MCF 10A (cell line): ENCODE measurements at regions of chr20 and their contacts with region 1.

Region 1: DNA sequence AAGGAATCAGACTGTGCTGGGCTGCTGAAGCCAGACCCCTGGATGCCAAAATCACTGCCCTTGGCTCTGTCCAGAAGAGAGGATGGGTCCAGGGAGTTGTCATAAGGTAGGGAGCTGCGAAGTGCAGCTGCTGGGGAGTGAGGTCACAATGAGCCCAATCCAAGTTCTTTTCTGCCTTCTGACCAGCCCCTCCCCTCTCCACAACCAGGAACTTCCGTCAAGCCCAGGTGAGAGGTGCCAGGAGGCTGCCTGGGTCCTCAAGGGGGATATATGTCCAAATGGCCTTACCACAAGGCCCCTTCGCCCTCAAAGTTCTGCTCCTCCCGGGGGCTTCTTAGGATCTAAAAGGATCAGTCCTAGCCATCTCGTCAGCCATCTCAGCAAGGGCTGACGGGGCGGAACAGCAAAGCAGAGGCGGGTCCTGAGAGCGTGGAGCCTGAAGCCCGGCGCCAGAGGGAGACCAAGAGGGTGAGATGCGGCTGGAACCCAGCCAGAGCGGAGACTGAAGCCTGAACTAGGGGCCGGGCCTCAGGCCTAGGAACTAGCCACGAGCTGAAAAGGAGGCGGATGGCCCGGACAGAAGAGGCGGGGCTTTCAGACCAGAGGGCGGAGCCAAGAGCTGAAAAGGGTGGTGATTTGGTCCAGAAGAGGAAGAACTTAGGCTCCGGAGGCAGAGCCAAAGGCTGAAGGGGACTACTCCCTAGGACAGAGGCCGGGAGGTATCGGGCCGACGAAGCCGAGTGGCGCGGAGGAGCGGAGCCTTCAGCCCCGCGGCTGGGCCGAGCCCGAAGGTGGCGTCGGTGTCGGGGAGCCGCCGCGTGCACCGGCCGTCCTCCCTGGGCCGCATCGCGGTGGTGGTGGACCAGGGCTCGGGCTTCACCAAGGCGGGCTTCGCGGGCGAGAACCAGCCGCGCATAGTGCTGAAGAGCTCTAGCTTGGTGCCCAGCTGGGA is at the start of gene ACTL10:
- DNase-seq: peak; percentile 99
- H3K4me3 Mint-ChIP-seq: peak within 1 kb of the TSS; percentile 98
- H3K27ac Mint-ChIP-seq: peak within 1 kb of the TSS; percentile 74
- H3K4me1 Mint-ChIP-seq: peaks cover 14% of the 10 kb centered on the region
- H3K27me3 Mint-ChIP-seq: no peaks in the 10 kb centered on the region
- CTCF ChIP-seq: no peak
- total RNA-seq, gene ACTL10: 1.7 and 3.2 TPM in 2 replicates

Region 2: GRCh38 chr20:33450867-33451266 is 215.7 kb before region 1 on chr20:
- CTCF ChIA-PET with region 1: interaction called, 18 read pairs
- POLR2A ChIA-PET with region 1: interaction called, 13 read pairs
- intact Hi-C with region 1: no loop called
- DNase-seq: peak; percentile 60
- H3K4me3 Mint-ChIP-seq: no peak overlapping the region
- H3K27ac Mint-ChIP-seq: no peak overlapping the region
- H3K4me1 Mint-ChIP-seq: peaks cover 6% of the 10 kb centered on the region
- H3K27me3 Mint-ChIP-seq: no peaks in the 10 kb centered on the region
- CTCF ChIP-seq: no peak

Region 3: GRCh38 chr20:33584976-33585375 is 81.6 kb before region 1 on chr20:
- CTCF ChIA-PET with region 1: interaction called, 12 read pairs
- POLR2A ChIA-PET with region 1: interaction called, 3 read pairs
- intact Hi-C with region 1: no loop called
- DNase-seq: no peak
- H3K4me3 Mint-ChIP-seq: no peak overlapping the region
- H3K27ac Mint-ChIP-seq: no peak overlapping the region
- H3K4me1 Mint-ChIP-seq: peaks cover 25% of the 10 kb centered on the region
- H3K27me3 Mint-ChIP-seq: no peaks in the 10 kb centered on the region
- CTCF ChIP-seq: no peak

Region 4: DNA sequence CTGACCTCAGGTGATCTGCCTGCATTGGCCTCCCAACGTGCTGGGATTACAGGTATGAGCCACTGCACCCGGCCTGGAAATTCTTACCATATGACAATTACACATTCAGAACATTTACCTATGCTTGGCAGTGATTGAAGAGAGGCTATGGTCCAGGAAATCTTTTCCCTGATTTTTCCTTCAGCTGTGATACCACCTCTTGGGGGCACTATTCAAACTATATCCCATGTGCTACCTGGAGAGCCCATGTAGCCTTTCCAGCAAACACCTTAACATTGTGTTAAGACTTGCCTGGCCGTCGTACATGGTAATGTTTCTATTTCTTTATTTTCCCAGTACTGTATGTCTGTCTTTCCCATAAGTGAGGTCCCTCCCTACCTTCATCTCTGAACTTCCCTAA is 66.2 kb before region 1 on chr20:
- CTCF ChIA-PET with region 1: no interaction called
- POLR2A ChIA-PET with region 1: no interaction called
- intact Hi-C with region 1: no loop called
- DNase-seq: no peak
- H3K4me3 Mint-ChIP-seq: no peak overlapping the region
- H3K27ac Mint-ChIP-seq: no peak overlapping the region
- H3K4me1 Mint-ChIP-seq: peaks cover 14% of the 10 kb centered on the region
- H3K27me3 Mint-ChIP-seq: no peaks in the 10 kb centered on the region
- CTCF ChIP-seq: no peak

Region 5: GRCh38 chr20:33686100-33686983 is 19.8 kb after region 1 on chr20 and contains the start of gene E2F1:
- CTCF ChIA-PET with region 1: interaction called, 53 read pairs
- POLR2A ChIA-PET with region 1: interaction called, 15 read pairs
- intact Hi-C with region 1: no loop called
- DNase-seq: peak; percentile 92
- H3K4me3 Mint-ChIP-seq: peak within 1 kb of the TSS; percentile 72
- H3K27ac Mint-ChIP-seq: no peak within 1 kb of the TSS
- H3K4me1 Mint-ChIP-seq: peaks cover 13% of the 10 kb centered on the region
- H3K27me3 Mint-ChIP-seq: no peaks in the 10 kb centered on the region
- CTCF ChIP-seq: no peak
- total RNA-seq, gene E2F1: 1.4 and 3.7 TPM in 2 replicates

Region 6: DNA sequence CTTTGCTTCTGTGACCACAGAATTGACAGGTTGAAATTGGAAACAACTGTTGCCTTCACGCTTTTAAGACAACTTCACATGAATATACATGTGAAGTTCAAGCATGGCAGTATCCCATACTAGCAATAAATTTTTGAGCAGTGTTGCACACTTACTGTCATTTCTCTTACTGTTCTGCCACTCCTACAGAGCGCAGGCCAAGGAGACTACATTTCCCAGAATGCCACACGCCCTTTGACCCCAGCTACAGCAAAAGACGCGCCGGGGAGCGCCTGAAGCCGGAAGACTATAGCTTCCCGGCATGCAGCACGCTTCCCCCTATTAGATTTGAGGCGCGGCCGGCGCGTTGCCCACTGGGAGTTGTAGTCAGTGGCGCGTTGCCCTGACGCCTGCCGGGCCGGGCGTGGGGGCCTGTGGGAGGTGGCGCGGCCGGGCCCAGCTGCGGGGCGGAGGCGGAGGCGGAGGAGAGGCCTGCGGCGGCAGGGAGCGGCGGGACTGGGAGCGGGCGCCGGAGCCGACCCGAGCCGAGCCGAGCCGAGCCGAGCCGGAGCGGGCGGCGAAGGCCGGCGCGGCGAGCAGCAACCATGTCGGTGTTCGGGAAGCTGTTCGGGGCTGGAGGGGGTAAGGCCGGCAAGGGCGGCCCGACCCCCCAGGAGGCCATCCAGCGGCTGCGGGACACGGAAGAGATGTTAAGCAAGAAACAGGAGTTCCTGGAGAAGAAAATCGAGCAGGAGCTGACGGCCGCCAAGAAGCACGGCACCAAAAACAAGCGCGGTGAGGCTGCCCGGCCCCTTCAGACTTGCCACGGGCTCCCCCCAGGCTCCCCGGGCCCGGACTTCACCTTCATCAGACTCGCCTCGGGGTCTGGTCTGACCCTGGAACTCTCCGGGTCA is 144.6 kb after region 1 on chr20 and contains the start of gene CHMP4B:
- CTCF ChIA-PET with region 1: interaction called, 4 read pairs
- POLR2A ChIA-PET with region 1: interaction called, 24 read pairs
- intact Hi-C with region 1: no loop called
- DNase-seq: peak; percentile 99
- H3K4me3 Mint-ChIP-seq: peak within 1 kb of the TSS; percentile 93
- H3K27ac Mint-ChIP-seq: peak within 1 kb of the TSS; percentile 100
- H3K4me1 Mint-ChIP-seq: peaks cover 19% of the 10 kb centered on the region
- H3K27me3 Mint-ChIP-seq: no peaks in the 10 kb centered on the region
- CTCF ChIP-seq: no peak
- total RNA-seq, gene CHMP4B: 77.6 and 95.2 TPM in 2 replicates

Region 7: DNA sequence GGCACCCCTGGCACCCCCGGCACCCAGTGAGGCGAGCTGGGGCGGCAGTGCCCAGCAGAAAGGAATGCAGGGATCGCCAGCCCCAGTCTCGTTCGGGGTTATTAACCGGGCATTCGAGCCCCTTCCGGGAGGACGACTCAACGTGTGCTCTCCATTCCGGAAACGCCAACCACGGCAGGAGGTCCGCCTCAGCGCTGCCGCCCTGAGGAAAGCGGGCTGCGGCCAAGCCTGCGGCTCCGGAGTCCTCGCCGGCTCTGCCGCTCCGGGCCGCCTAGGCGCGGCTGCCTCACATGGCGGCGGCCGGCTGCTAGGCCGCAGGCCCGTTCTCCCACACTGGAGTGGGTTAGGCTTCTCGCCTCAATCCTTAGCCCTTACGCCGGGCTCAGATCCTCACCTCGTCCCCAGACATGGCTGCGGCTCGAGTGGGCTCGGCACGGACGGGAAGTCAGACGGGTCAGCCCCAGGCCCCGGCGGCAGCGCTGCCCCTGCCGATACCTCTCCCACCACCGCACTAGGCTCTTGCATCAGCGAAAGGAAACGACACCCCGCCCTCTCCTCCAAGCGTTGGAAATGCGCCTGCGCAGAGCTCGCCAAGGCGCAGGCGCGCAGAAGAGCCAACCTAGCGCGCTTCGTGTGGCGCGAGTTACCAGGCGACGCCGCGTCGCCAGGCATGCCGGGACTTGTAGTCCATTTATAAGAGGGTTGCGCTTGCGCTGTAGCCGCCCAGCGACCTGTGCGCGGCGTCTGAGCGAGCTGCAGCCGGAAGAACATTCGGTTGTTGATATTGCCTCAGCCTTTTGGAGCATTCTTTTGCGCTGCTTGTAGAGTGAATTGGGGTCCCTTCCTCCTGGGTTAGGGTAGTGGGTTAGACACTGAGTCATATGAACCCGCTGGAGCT is 445.4 kb after region 1 on chr20 and contains the start of gene EIF2S2:
- CTCF ChIA-PET with region 1: interaction called, 3 read pairs
- POLR2A ChIA-PET with region 1: interaction called, 15 read pairs
- intact Hi-C with region 1: no loop called
- DNase-seq: peak; percentile 98
- H3K4me3 Mint-ChIP-seq: peak within 1 kb of the TSS; percentile 91
- H3K27ac Mint-ChIP-seq: peak within 1 kb of the TSS; percentile 98
- H3K4me1 Mint-ChIP-seq: peaks cover 34% of the 10 kb centered on the region
- H3K27me3 Mint-ChIP-seq: no peaks in the 10 kb centered on the region
- CTCF ChIP-seq: no peak
- total RNA-seq, gene EIF2S2: 151 and 191 TPM in 2 replicates